ENCODE measurements at regions of chr17 and their contacts with region 1.

Region 1: GRCh38 chr17:44533533-44534246 is 23.6 kb upstream of the FZD2 start:
- DNase-seq: peak in 1 of 2 donors; percentile 93
- H3K4me3 ChIP-seq: peak overlapping the region in 1 of 2 donors; percentile 49
- H3K27ac ChIP-seq: peak overlapping the region; percentile 62 to 74
- H3K4me1 ChIP-seq: peaks cover 5% of the 10 kb centered on the region in 2 donors
- H3K27me3 ChIP-seq: no peaks in the 10 kb centered on the region
- CTCF ChIP-seq: peak; percentile 93 to 98 (median 98)

Region 2: GRCh38 chr17:44587339-44587738 is 53.6 kb after region 1 on chr17:
- intact Hi-C with region 1: loop called (anchors 10 kb)
- DNase-seq: peak; percentile 64 to 90
- H3K4me3 ChIP-seq: no peak overlapping the region
- H3K27ac ChIP-seq: peak overlapping the region; percentile 86 to 94
- H3K4me1 ChIP-seq: peaks cover 6 to 25% of the 10 kb centered on the region in 2 donors
- H3K27me3 ChIP-seq: no peaks in the 10 kb centered on the region
- CTCF ChIP-seq: no peak

Region 3: DNA sequence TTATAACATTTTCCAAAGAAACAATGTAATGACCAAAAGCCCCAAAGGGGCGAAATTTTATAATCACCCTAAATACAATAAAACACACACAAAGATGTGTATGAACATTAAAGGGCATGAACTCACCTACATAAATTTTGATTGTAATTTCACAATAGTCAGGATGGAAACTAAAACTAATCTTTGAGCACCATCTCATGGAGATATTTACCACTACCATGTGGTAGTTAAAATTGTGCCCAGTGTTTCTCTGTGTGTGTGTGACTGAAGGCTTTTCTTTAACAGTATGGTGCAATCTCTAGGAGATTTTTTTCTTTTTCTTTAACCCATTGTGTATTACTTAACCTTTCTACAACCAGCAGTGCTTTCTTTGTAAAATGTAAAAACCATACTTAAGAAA is 102.9 kb after region 1 on chr17:
- intact Hi-C with region 1: loop called (anchors 1 kb)
- DNase-seq: no peak
- H3K4me3 ChIP-seq: no peak overlapping the region
- H3K27ac ChIP-seq: no peak overlapping the region
- H3K4me1 ChIP-seq: no peaks in the 10 kb centered on the region
- H3K27me3 ChIP-seq: no peaks in the 10 kb centered on the region
- CTCF ChIP-seq: peak; percentile 50 to 70 (median 67)